ENCODE measurements at regions of chr9 and their contacts with region 1.

Region 1: GRCh38 chr9:69421908-69422801 is 97.1 kb downstream of the ENTREP1 start:
- DNase-seq: peak; percentile 44 to 71
- H3K4me3 ChIP-seq: no peak overlapping the region
- H3K27ac ChIP-seq: no peak overlapping the region
- H3K4me1 ChIP-seq: peaks cover 0 to 4% (median 0%) of the 10 kb centered on the region in 4 donors
- H3K27me3 ChIP-seq: peaks cover 0 to 4% of the 10 kb centered on the region in 2 donors
- CTCF ChIP-seq: peak; percentile 80 to 83

Region 2: GRCh38 chr9:69542942-69543704 is 121.0 kb after region 1 on chr9:
- intact Hi-C with region 1: loop called (anchors 5 kb)
- DNase-seq: no peak
- H3K4me3 ChIP-seq: no peak overlapping the region
- H3K27ac ChIP-seq: no peak overlapping the region
- H3K4me1 ChIP-seq: no peaks in the 10 kb centered on the region
- H3K27me3 ChIP-seq: no peaks in the 10 kb centered on the region
- CTCF ChIP-seq: no peak

Region 3: GRCh38 chr9:69877854-69878514 is 455.8 kb after region 1 on chr9:
- intact Hi-C with region 1: loop called (anchors 10 kb)
- DNase-seq: no peak
- H3K4me3 ChIP-seq: no peak overlapping the region
- H3K27ac ChIP-seq: no peak overlapping the region
- H3K4me1 ChIP-seq: no peaks in the 10 kb centered on the region
- H3K27me3 ChIP-seq: no peaks in the 10 kb centered on the region
- CTCF ChIP-seq: peak; percentile 39 to 40

Region 4: DNA sequence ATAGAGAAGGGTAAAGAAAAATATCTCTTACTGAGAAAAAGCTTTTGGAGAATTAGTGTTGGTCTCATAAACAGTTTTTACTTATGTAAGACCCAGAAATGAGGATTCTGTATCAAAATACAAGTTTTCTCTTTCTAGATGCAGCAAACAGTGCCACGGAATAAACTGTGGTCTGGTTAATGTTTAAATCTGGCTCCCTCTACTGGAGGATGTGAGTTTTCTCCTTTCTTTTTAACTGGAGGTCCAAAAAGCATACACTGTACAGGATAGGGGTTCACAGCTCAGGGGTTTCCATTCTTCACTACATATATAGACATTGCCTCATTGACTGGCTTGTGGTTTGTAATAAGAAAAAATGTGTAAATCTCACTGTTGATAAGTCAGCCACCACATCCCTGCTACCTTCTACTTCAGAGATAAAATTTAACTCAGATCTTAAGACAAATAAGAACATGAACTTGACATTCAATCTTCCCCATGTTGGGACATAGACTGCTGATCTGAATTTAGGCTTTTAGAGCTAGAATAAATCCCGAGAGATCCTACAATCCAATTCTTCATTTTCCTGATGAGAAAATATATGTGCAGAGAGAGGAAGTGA is 497.4 kb after region 1 on chr9:
- intact Hi-C with region 1: loop called (anchors 5 kb)
- DNase-seq: no peak
- H3K4me3 ChIP-seq: no peak overlapping the region
- H3K27ac ChIP-seq: no peak overlapping the region
- H3K4me1 ChIP-seq: no peaks in the 10 kb centered on the region
- H3K27me3 ChIP-seq: peaks cover 0 to 5% of the 10 kb centered on the region in 2 donors
- CTCF ChIP-seq: peak; percentile 51 to 57

Measured in tibial artery (tissue), 4 donors.